Activated T-helper 1 cell treated with anti-CD3 and anti-CD28 coated beads, Interleukin-12 subunit alpha, Interleukin-12 subunit beta, Interleukin-2, Interleukin-4 antibody, amounts not matched to agents 30 ng/mL and 10 ng/mL and 1 ng/mL, durations not matched to agents 14 hours and 24 hours and 36 hours (primary cell): ENCODE measurements at regions of chr2 and their contacts with region 1.

Region 1: GRCh38 chr2:38274286-38275276 is 102.5 kb downstream of the ATL2 start:
- DNase-seq: no peak
- H3K4me3 Mint-ChIP-seq: no peak overlapping the region
- H3K27ac Mint-ChIP-seq: no peak overlapping the region
- H3K4me1 Mint-ChIP-seq: peaks cover 12% of the 10 kb centered on the region
- H3K27me3 Mint-ChIP-seq: peaks cover 4% of the 10 kb centered on the region

Region 2: DNA sequence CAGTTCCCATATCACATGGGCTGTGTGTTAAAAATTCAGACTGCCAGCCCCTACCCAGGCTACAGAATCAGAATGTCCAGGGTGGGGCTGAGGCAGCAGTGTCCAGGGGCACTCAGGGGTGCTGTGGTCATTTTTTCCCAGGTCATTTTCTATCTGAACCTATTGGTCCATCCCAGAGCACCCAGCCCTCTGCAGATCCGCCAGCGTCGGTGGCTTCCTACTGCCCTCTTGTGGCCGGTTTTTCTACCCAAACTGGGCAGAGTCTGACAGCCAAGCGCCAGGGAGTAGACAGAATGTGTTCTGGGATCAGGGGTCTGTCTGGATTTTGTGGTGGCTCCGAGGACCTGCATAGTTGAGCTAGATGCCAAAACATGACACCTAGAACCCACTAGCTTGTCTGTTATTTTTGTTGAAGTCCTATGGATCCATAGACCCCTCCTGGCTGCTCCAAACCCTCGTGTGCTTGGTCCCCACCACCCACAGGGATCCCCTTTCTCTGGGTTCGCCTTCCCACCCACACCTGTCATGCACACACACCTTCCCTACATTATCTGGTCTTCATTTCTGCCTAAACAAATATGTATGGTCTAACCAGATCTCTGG is 383.6 kb before region 1 on chr2:
- intact Hi-C with region 1: loop called (anchors 1 kb)
- DNase-seq: peak; percentile 35
- H3K4me3 Mint-ChIP-seq: no peak overlapping the region
- H3K27ac Mint-ChIP-seq: no peak overlapping the region
- H3K4me1 Mint-ChIP-seq: peaks cover 8% of the 10 kb centered on the region
- H3K27me3 Mint-ChIP-seq: peaks cover 13% of the 10 kb centered on the region

Region 3: GRCh38 chr2:37982147-37982582 is 292.4 kb before region 1 on chr2:
- intact Hi-C with region 1: loop called (anchors 1 kb)
- DNase-seq: peak; percentile 16
- H3K4me3 Mint-ChIP-seq: no peak overlapping the region
- H3K27ac Mint-ChIP-seq: no peak overlapping the region
- H3K4me1 Mint-ChIP-seq: peaks cover 14% of the 10 kb centered on the region
- H3K27me3 Mint-ChIP-seq: peaks cover 9% of the 10 kb centered on the region

Region 4: GRCh38 chr2:38448692-38449410 is 174.3 kb after region 1 on chr2:
- intact Hi-C with region 1: no loop called
- DNase-seq: no peak
- H3K4me3 Mint-ChIP-seq: no peak overlapping the region
- H3K27ac Mint-ChIP-seq: no peak overlapping the region
- H3K4me1 Mint-ChIP-seq: no peaks in the 10 kb centered on the region
- H3K27me3 Mint-ChIP-seq: peaks cover 6% of the 10 kb centered on the region

Region 5: GRCh38 chr2:38508311-38509039 is 233.9 kb after region 1 on chr2:
- intact Hi-C with region 1: loop called (anchors 1 kb)
- DNase-seq: peak; percentile 67
- H3K4me3 Mint-ChIP-seq: no peak overlapping the region
- H3K27ac Mint-ChIP-seq: no peak overlapping the region
- H3K4me1 Mint-ChIP-seq: peaks cover 19% of the 10 kb centered on the region
- H3K27me3 Mint-ChIP-seq: peaks cover 2% of the 10 kb centered on the region